Heart left ventricle (tissue), 16 donors: ENCODE measurements at regions of chr17 and their contacts with region 1.

Region 1: DNA sequence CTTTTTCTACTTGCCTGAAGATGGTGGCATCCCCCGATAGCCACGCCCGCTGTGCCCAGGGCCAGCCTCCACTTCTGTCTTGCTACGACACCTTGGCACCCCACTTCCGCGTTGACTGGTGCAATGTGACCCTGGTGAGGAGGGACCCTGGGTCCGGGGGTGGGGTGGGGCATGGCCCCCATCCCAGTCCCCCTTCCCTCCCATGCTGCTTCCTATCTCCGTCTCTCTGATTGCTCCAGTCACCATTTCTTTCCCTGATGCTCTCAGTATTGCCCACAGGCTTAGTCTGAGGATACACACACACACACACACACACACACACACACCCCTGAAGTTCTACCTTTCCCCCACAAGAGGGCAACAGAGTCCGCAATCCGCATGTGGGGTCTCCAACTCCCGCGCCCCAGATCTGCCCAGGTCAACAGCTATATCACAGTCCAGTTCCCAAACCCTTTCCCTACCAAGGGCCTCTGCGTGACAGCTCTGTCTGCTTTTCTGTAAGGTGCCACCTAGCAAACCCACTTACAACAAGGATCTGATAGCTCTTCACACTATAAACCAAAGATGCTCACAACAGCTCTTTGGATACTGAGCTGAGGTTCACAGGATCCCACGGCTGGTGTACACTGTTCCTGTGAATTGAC is 3.4 kb downstream of the SGCA start:
- DNase-seq: peak in 3 of 5 donors; percentile 47 to 59 (median 52)
- ATAC-seq: peak in 3 of 4 donors; percentile 4 to 19 (median 6)
- H3K4me3 ChIP-seq: no peak overlapping the region
- H3K27ac ChIP-seq: peak overlapping the region in 4 of 12 donors; percentile 9 to 94 (median 30)
- H3K4me1 ChIP-seq: peaks cover 0 to 80% (median 23%) of the 10 kb centered on the region in 12 donors
- H3K27me3 ChIP-seq: no peaks in the 10 kb centered on the region
- CTCF ChIP-seq: peak; percentile 30 to 71 (median 52)
- POLR2A ChIP-seq: no peak

Region 2: DNA sequence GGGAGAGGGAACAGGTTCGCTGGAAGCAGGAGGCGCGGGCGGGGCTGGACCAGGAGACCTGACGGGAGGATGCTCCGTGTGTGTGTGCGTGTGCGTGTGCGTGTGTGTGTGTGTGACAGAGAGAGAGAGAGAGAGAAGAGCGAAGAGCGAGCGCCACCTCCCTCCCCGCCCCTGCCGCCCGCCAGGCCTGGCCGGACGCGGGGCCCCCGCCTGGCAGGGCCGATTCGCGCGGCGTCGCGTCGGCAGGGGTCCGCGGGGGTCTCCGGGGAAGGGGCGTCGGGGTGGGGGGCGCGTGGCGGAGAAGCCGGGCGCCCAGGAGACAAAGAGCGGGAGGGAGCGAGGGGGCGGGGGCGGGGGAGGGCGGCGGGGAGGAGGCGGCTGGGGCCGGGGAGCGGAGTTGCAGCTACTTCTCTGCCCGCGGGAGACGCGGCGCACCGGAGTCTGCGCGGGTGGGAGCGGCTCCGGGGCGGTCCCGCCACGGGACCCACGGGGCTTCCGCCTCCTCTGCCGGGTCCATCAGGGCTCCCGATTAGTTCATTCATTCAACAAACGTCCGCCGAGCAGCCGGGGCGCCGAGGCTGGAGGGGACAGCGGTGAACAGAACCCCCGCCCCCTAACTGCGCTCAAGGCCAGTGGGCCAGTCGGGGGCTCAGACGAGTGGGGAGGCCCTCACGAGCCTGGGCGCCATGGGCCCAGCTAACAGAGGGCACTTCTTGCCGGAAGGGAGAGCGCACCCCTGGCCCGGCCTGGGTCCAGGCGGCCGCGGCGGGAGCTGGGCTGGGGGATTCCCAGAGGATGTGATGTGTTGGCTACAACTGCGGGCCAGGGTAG is 39.3 kb before region 1 on chr17 and contains the start of gene SAMD14:
- intact Hi-C with region 1: loop called in 3 of 10 experiments (anchors 5 kb)
- DNase-seq: peak in 2 of 5 donors; percentile 50 to 54
- ATAC-seq: peak in 3 of 4 donors; percentile 5 to 31 (median 15)
- H3K4me3 ChIP-seq: peak within 1 kb of the TSS; percentile 22 to 61 (median 51)
- H3K27ac ChIP-seq: peak within 1 kb of the TSS in 1 of 12 donors; percentile 24
- H3K4me1 ChIP-seq: peaks cover 0 to 58% (median 29%) of the 10 kb centered on the region in 12 donors
- H3K27me3 ChIP-seq: peaks cover 0 to 20% (median 0%) of the 10 kb centered on the region in 9 donors
- CTCF ChIP-seq: no peak
- POLR2A ChIP-seq: no peak
- total RNA-seq, gene SAMD14: 0.44 to 3.9 (median 1.2) TPM

Region 3: DNA sequence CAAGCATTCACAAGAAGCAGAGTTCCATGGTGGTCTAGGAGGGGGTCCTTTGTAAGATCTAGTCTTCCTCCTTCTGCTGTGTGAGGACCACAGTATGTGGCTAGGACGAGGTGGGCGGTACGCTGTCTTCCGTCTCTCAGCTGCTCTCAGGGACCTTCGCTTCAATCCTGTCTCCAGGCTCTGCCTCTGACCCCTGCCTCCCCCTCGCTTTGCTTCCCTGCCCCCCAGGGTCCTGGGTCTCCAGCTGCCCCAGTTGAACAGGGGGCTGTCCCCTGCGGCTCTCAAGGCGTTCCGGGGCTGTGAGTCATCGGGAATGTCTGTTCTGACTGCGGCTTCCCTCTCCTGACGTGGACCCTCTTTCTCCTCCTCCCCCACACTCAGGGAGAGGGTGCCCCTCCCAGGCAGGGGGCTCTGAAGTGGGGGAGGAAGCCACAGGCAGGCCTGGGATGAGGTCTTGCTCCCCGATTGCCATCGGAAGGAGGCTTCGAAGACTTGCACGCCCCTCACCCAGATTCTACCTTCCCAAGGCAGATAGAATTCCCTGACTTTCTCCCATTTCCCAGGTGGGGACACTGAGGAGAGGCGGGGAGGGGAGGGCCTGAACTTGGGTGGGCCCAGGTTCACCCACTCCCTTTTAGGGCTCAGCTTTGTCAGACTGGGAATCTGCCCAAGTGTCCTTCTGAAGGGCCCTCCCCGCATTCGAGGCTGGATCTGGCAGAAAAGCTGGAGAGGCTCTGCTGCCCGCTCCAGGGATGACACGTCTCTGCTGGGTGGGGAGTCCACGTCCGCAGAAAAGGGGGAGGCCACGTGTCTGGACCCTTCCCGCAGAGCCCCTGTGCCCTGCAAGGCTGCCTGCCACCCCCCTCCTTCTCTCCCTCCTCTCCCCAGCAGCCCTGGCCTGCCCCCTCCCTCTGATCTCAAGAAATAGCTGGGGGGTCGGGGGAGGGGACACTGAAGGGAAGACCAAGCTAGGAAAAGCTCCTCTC is 41.3 kb after region 1 on chr17:
- intact Hi-C with region 1: no loop called
- DNase-seq: peak; percentile 68 to 93 (median 81)
- ATAC-seq: peak; percentile 29 to 80 (median 61)
- H3K4me3 ChIP-seq: peak overlapping the region in 3 of 12 donors; percentile 3 to 21 (median 18)
- H3K27ac ChIP-seq: peak overlapping the region; percentile 47 to 92 (median 80)
- H3K4me1 ChIP-seq: peaks cover 0 to 67% (median 33%) of the 10 kb centered on the region in 12 donors
- H3K27me3 ChIP-seq: peaks cover 0 to 32% (median 4%) of the 10 kb centered on the region in 9 donors
- CTCF ChIP-seq: no peak
- POLR2A ChIP-seq: no peak

Region 4: GRCh38 chr17:50297407-50297865 is 128.2 kb after region 1 on chr17:
- intact Hi-C with region 1: loop called in 1 of 10 experiments (anchors 2 kb)
- DNase-seq: peak; percentile 67 to 87 (median 74)
- ATAC-seq: peak; percentile 87 to 93 (median 92)
- H3K4me3 ChIP-seq: no peak overlapping the region
- H3K27ac ChIP-seq: no peak overlapping the region
- H3K4me1 ChIP-seq: no peaks in the 10 kb centered on the region
- H3K27me3 ChIP-seq: peaks cover 0 to 3% (median 0%) of the 10 kb centered on the region in 9 donors
- CTCF ChIP-seq: peak; percentile 86 to 97 (median 94)
- POLR2A ChIP-seq: no peak